ENCODE measurements at regions of chr1 and their contacts with region 1.

Region 1: DNA sequence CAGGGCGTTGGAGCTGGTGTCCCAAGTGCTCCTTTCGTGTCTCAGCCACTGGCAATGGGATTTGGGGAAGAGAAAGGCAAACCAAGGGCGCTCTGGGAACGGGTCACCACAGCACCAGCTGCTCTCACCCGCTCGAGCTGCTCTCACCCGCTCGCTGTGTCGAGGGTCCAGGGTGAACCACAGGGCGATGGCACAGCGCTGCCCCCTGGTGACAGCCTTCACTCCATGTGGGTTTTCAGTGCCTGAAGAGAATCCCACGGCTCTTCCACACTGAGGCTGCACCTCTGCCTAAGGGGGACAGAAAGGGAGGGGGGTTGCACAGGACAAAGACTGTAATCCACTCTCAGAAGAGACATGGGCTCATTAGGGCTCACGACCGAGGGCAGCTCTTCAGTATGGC is 7.1 kb upstream of the CLDN19 start:
- DNase-seq: peak in 13 of 14 experiments; percentile 15 to 68 (median 41)
- ATAC-seq: peak; percentile 48
- H3K4me3 ChIP-seq: no peak overlapping the region
- H3K4me3 Mint-ChIP-seq: no peak overlapping the region
- H3K27ac ChIP-seq: no peak overlapping the region
- H3K27ac Mint-ChIP-seq: no peak overlapping the region
- H3K4me1 ChIP-seq: no peaks in the 10 kb centered on the region
- H3K4me1 Mint-ChIP-seq: no peaks in the 10 kb centered on the region
- H3K27me3 ChIP-seq: no peaks in the 10 kb centered on the region
- H3K27me3 Mint-ChIP-seq: no peaks in the 10 kb centered on the region
- CTCF ChIP-seq: peak; percentile 69

Region 2: GRCh38 chr1:42146626-42147320 is 600.4 kb before region 1 on chr1:
- CTCF ChIA-PET with region 1: no interaction called
- POLR2A ChIA-PET with region 1: no interaction called
- intact Hi-C with region 1: loop called in 1 of 2 experiments (anchors 5 kb)
- DNase-seq: peak; percentile 49 to 77 (median 62)
- ATAC-seq: peak; percentile 86
- H3K4me3 ChIP-seq: no peak overlapping the region
- H3K4me3 Mint-ChIP-seq: no peak overlapping the region
- H3K27ac ChIP-seq: no peak overlapping the region
- H3K27ac Mint-ChIP-seq: no peak overlapping the region
- H3K4me1 ChIP-seq: peaks cover 14% of the 10 kb centered on the region
- H3K4me1 Mint-ChIP-seq: no peaks in the 10 kb centered on the region
- H3K27me3 ChIP-seq: peaks cover 13 to 16% of the 10 kb centered on the region in 2 experiments
- H3K27me3 Mint-ChIP-seq: peaks cover 5% of the 10 kb centered on the region
- CTCF ChIP-seq: peak; percentile 71

Region 3: DNA sequence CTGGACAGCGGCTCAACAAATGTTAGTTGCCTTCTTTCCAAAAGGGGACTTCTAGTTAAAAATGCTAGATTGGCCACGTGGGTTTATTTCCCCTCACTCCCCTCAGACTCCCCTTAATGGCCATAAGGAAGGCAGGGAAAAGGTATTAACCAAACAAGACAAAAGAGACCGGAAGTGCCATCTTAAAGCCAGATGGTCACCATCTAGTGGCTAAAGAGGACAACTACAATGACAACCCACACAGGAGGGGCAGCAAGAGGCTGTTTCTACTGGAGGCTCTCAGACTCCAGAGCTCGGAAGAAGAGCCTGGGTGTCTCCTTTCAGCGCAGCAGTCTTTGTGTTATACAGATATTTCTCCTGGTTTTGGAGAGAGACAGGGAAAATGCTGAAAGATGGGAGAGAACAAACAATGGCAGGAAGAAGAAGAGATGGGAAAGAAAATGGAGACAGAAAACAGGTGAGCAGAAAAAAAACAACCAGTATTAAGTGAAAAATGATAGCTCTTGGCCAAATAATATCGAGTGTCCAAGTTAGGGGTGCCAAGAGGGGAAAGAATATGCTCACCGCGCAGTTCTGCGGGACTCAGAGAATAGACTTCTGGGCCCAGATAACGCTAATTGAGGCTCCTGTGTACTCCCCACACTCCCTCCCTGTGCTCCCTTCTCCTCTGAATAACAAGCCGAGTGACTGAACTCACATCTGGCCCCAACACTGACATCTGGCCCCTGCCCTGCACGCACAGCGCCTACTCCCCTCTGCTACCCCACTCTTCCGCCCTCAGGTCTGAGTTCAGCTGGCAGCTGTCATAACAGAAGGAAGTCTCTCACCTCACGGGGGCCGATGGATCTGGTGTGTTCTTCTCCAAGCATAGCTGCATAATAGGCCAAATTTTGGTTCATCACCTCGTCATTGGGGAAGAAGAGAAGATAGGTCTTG is 10.1 kb after region 1 on chr1:
- CTCF ChIA-PET with region 1: no interaction called
- POLR2A ChIA-PET with region 1: no interaction called
- intact Hi-C with region 1: no loop called
- DNase-seq: peak in 3 of 14 experiments; percentile 33 to 62 (median 59)
- ATAC-seq: peak; percentile 44
- H3K4me3 ChIP-seq: no peak overlapping the region
- H3K4me3 Mint-ChIP-seq: no peak overlapping the region
- H3K27ac ChIP-seq: no peak overlapping the region
- H3K27ac Mint-ChIP-seq: no peak overlapping the region
- H3K4me1 ChIP-seq: no peaks in the 10 kb centered on the region
- H3K4me1 Mint-ChIP-seq: peaks cover 4% of the 10 kb centered on the region
- H3K27me3 ChIP-seq: no peaks in the 10 kb centered on the region
- H3K27me3 Mint-ChIP-seq: no peaks in the 10 kb centered on the region
- CTCF ChIP-seq: peak; percentile 58

Region 4: GRCh38 chr1:43688594-43689000 is 941.5 kb after region 1 on chr1:
- CTCF ChIA-PET with region 1: no interaction called
- POLR2A ChIA-PET with region 1: no interaction called
- intact Hi-C with region 1: no loop called
- DNase-seq: no peak
- ATAC-seq: no peak
- H3K4me3 ChIP-seq: no peak overlapping the region
- H3K4me3 Mint-ChIP-seq: no peak overlapping the region
- H3K27ac ChIP-seq: no peak overlapping the region
- H3K27ac Mint-ChIP-seq: no peak overlapping the region
- H3K4me1 ChIP-seq: no peaks in the 10 kb centered on the region
- H3K4me1 Mint-ChIP-seq: no peaks in the 10 kb centered on the region
- H3K27me3 ChIP-seq: no peaks in the 10 kb centered on the region
- H3K27me3 Mint-ChIP-seq: no peaks in the 10 kb centered on the region
- CTCF ChIP-seq: no peak

Measured in CD4-positive, alpha-beta T cell (primary cell).